Activated CD4-positive, alpha-beta memory T cell treated with anti-CD3 and anti-CD28 coated beads for 36 hours (primary cell): ENCODE measurements at regions of chr1 and their contacts with region 1.

Region 1: DNA sequence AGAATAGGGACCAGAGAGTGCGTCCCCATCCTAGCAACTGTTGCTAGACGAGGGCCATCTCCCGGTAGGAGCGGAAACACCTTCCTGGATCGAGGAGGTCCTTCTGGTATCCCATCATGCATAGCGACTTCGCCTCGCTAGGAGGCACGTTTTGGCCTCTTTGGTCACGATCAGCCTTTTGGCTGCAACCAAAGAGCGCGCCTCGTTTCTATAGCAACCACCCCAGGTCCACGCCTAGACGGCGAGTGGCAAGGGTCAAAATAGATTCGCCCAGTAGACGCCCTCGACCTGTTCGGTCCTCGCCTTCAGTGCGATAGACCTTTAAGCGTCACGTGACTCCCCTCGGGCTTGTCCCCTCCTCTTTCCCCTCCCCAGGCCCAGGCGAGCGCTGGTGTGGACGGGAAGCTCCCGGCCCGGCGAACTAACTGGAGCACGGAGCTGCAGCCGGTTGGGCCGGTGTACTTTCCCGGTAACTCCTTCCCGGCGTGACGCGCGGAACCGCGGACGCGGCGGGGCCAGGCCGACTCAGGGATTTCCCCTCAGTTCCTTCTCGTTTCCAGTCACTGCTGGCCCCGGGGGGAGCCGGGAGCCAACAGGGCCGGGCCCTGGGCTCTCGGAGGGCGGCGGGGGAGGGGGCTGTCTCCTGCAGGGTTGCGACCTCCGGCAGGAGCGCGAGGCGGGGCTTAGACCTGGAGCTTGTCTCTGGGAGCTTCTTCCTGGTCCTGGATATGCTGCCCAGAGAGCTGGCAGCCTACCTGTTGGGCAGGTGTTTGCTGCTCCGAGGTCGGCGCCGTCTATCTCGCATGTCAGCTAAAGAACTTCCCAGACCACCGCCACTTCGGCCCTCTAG is at the start of gene DNAJC16:
- DNase-seq: peak; percentile 99
- H3K4me3 Mint-ChIP-seq: peak within 1 kb of the TSS; percentile 89
- H3K27ac Mint-ChIP-seq: peak within 1 kb of the TSS; percentile 99
- H3K4me1 Mint-ChIP-seq: peaks cover 50% of the 10 kb centered on the region
- H3K27me3 Mint-ChIP-seq: no peaks in the 10 kb centered on the region
- total RNA-seq, gene DNAJC16: 10.0 to 10.4 TPM

Region 2: DNA sequence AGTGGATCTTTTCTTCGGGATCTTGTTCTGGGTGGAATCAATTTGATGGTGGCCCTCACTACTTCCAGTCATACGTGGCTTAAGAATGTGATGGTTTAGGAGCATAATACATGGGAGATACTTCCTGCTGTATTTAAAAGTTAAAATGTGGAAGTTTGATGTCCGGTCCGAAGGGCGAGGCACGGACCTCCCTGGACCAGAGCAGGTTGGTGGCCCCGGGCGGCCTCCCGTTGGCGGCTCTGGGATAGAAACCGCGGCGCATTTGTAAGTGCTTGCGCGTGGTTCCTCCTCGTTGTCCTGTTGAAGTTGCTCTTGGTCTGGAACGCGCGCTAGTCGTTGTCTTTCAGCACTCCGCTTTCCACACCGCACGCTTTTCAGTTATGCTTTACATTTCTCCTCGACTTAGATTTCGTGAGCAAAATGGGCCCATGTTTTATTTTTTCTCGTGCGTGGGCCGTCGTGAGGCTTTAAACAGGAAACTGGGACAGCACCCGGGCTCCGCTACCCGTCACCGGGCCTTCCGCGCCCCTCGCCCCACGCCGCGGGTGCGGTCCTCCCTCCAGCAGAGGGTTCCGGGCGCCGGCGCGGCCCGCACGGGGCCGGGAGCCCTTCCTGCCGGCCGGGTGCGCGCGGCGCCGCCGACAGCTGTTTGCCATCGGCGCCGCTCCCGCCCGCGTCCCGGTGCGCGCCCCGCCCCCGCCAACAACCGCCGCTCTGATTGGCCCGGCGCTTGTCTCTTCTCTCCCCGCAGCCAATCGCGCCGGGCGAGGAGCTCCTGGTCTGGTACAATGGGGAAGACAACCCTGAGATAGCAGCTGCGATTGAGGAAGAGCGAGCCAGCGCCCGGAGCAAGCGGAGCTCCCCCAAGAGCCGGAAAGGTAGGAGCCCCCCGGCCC is 1777.9 kb before region 1 on chr1:
- CTCF ChIA-PET with region 1: no interaction called
- POLR2A ChIA-PET with region 1: no interaction called
- intact Hi-C with region 1: loop called (anchors 2 kb)
- DNase-seq: peak; percentile 96
- H3K4me3 Mint-ChIP-seq: peak overlapping the region; percentile 83
- H3K27ac Mint-ChIP-seq: peak overlapping the region; percentile 93
- H3K4me1 Mint-ChIP-seq: peaks cover 50% of the 10 kb centered on the region
- H3K27me3 Mint-ChIP-seq: no peaks in the 10 kb centered on the region

Region 3: DNA sequence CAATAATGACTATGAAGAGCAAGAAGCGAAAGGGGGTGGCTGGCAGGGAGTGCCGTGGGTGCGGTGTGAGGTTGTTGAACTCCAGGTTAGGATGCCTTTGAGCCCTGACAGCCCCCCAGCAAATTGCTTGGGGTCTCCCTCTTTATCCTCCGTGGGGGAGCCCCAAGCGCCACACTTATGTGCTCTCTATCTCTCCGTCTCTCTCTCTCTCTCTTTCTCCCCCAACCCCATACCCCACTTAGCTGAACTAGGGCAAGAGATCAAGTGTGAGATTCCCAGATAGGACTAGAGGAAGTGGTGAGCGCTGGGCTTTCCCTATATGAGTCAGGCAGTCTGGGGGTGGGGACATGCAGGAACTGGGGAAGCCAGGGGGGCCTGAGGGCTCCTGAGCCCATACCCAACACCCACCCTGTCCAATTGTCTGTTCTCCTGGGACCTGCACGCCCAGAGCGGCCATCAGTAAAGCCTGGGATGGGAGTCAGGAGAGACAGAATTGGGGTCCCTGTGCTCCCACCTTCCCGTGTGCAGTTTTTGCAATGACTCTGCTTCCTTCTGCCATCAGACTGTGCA is 109.3 kb before region 1 on chr1:
- CTCF ChIA-PET with region 1: no interaction called
- POLR2A ChIA-PET with region 1: no interaction called
- intact Hi-C with region 1: loop called (anchors 2 kb)
- DNase-seq: peak; percentile 73
- H3K4me3 Mint-ChIP-seq: peak overlapping the region; percentile 35
- H3K27ac Mint-ChIP-seq: peak overlapping the region; percentile 71
- H3K4me1 Mint-ChIP-seq: peaks cover 58% of the 10 kb centered on the region
- H3K27me3 Mint-ChIP-seq: no peaks in the 10 kb centered on the region

Region 4: GRCh38 chr1:15617175-15617880 is 90.6 kb after region 1 on chr1 and contains the start of gene DDI2:
- CTCF ChIA-PET with region 1: no interaction called
- POLR2A ChIA-PET with region 1: no interaction called
- intact Hi-C with region 1: loop called (anchors 1 kb)
- DNase-seq: peak; percentile 96
- H3K4me3 Mint-ChIP-seq: peak within 1 kb of the TSS; percentile 95
- H3K27ac Mint-ChIP-seq: peak within 1 kb of the TSS; percentile 93
- H3K4me1 Mint-ChIP-seq: peaks cover 33% of the 10 kb centered on the region
- H3K27me3 Mint-ChIP-seq: no peaks in the 10 kb centered on the region
- total RNA-seq, gene DDI2: 26.3 to 28.2 TPM

Region 5: DNA sequence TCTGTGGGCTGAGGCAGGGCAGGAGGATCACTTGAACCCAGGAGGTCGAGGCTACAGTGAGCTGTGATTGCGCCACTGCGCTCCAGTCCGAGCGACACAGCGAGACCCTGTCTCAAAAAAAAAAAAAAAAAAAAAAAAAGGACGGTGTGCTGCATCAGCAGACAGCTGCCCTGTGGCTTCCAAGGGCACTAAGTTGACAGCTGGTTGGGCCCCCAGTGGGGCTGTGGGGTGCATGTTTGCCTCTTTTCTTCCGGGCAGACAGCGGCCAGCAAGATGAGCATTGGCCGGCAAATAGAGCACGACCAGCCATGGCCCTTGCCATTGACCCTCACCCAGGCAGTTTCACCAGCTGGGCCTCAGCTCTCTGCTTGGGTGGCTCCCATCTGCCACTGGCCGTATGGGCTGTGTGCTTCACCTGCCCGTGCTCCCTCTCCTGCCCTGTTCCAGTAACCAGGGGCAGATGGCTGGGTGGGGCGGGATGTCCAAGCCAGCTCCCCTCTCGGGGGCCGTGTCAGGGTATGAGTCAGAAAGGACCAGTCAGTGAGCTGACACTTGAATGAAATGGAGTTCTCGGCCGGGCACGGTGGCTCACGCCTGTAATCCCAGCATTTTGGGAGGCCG is 197.0 kb after region 1 on chr1:
- CTCF ChIA-PET with region 1: no interaction called
- POLR2A ChIA-PET with region 1: no interaction called
- intact Hi-C with region 1: no loop called
- DNase-seq: no peak
- H3K4me3 Mint-ChIP-seq: no peak overlapping the region
- H3K27ac Mint-ChIP-seq: no peak overlapping the region
- H3K4me1 Mint-ChIP-seq: no peaks in the 10 kb centered on the region
- H3K27me3 Mint-ChIP-seq: no peaks in the 10 kb centered on the region

Region 6: DNA sequence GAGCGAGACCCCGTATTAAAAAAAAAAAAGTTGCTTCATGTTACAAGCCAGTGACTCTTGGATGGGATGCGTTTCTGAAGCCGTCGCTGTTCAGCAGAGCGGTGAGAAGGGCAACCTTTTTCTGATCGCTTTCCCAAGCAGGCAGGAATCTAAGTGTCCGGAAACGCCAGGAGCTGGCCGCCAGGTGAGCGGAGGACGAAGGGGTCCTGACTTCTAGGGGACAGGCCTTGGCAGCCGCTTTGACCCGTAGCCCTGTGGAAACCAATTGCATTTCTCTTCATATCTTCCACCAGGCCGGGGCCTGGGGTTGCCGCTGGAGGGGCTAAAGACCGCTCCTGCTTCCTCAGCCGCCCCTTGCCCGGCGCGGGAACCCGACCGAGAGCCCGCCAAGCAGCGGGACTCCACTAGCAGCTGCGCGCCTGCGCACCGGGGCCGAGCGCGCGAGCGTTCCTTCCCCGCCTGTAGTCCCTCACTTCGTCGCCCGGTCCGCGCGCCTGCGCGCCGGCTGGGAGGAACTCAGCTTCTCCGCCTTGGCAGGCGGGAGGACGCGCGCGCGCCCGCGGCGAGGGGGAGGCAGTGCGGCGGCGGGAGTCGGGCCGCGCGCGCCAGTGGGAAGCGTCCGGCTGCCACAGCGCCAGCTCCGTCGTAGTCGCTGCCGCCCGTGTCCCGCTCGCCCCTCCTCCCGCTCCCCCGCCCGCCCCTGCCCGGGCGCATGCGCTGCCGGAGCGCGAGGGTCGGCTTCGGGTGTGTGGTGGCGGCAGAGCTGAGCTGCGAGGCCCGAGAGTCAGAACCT is 320.6 kb after region 1 on chr1 and contains the start of gene SPEN:
- CTCF ChIA-PET with region 1: no interaction called
- POLR2A ChIA-PET with region 1: no interaction called
- intact Hi-C with region 1: loop called (anchors 2 kb)
- DNase-seq: peak; percentile 98
- H3K4me3 Mint-ChIP-seq: peak within 1 kb of the TSS; percentile 98
- H3K27ac Mint-ChIP-seq: peak within 1 kb of the TSS; percentile 93
- H3K4me1 Mint-ChIP-seq: peaks cover 45% of the 10 kb centered on the region
- H3K27me3 Mint-ChIP-seq: no peaks in the 10 kb centered on the region
- total RNA-seq, gene SPEN: 37.0 to 41.9 TPM

Region 7: GRCh38 chr1:16217061-16217785 is 690.5 kb after region 1 on chr1:
- CTCF ChIA-PET with region 1: no interaction called
- POLR2A ChIA-PET with region 1: no interaction called
- intact Hi-C with region 1: loop called (anchors 10 kb)
- DNase-seq: peak; percentile 98
- H3K4me3 Mint-ChIP-seq: peak overlapping the region; percentile 81
- H3K27ac Mint-ChIP-seq: no peak overlapping the region
- H3K4me1 Mint-ChIP-seq: peaks cover 10% of the 10 kb centered on the region
- H3K27me3 Mint-ChIP-seq: peaks cover 2% of the 10 kb centered on the region